ENCODE measurements at regions of chr2 and their contacts with region 1.

Region 1: GRCh38 chr2:108583903-108584520 is 49.7 kb downstream of the LIMS1 start:
- DNase-seq: peak; percentile 45 to 50
- H3K4me3 ChIP-seq: no peak overlapping the region
- H3K27ac ChIP-seq: no peak overlapping the region
- H3K4me1 ChIP-seq: no peaks in the 10 kb centered on the region
- H3K27me3 ChIP-seq: no peaks in the 10 kb centered on the region
- CTCF ChIP-seq: peak; percentile 84

Region 2: GRCh38 chr2:107936433-107937359 is 647.3 kb before region 1 on chr2:
- CTCF ChIA-PET with region 1: interaction called, 3 read pairs
- POLR2A ChIA-PET with region 1: no interaction called
- intact Hi-C with region 1: loop called (anchors 2 kb)
- DNase-seq: peak in 1 of 2 experiments; percentile 3
- H3K4me3 ChIP-seq: no peak overlapping the region
- H3K27ac ChIP-seq: no peak overlapping the region
- H3K4me1 ChIP-seq: no peaks in the 10 kb centered on the region
- H3K27me3 ChIP-seq: peaks cover 19% of the 10 kb centered on the region
- CTCF ChIP-seq: peak; percentile 79

Region 3: DNA sequence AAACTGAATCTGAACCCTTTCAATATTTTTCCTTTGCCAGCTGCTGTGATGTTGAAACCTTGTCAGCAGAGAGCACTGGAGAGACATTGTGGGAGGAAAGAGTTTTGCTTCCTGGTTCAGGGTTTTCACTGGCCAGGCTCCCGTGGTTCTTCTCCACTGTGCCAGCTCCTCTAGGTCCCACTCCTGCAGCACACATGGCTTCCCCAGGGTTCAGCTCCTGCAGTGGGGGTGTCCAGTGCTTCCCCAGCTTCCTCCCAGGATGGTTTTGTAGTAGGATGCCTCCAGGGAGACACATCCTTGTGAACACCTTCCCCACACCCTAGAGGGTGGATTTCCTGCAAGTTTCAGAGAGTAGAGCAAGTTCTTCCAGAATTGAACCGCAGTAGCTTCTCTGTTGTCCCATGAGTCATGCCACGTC is 368.2 kb before region 1 on chr2:
- CTCF ChIA-PET with region 1: no interaction called
- POLR2A ChIA-PET with region 1: no interaction called
- intact Hi-C with region 1: loop called (anchors 1 kb)
- DNase-seq: peak; percentile 19 to 49
- H3K4me3 ChIP-seq: peak overlapping the region; percentile 35
- H3K27ac ChIP-seq: peak overlapping the region; percentile 33; the same call in 1 of the 2 replicates
- H3K4me1 ChIP-seq: peaks cover 18% of the 10 kb centered on the region
- H3K27me3 ChIP-seq: no peaks in the 10 kb centered on the region
- CTCF ChIP-seq: no peak; the same call in 1 of the 2 replicates

Region 4: DNA sequence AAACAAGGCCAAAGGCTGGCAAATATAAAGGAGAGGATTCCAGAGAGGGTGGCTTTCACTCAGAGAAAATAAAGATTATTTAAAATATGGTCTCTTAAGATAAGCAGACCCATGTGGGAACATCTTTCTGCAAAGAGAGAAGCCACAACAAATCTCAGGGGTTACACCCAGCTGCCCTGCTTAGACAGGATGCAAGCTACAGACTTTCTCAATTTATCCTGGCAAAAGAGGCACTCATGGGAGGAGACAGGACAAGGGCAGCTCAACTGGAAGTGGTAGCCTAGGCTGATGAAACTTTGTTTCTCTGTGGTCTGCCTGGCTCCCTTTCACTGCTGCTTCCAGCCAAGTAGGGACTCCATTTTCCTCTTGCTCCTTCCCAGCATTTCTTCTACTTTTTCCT is 232.1 kb before region 1 on chr2:
- CTCF ChIA-PET with region 1: interaction called, 3 read pairs
- POLR2A ChIA-PET with region 1: no interaction called
- intact Hi-C with region 1: loop called (anchors 1 kb)
- DNase-seq: no peak
- H3K4me3 ChIP-seq: no peak overlapping the region
- H3K27ac ChIP-seq: no peak overlapping the region
- H3K4me1 ChIP-seq: no peaks in the 10 kb centered on the region
- H3K27me3 ChIP-seq: no peaks in the 10 kb centered on the region
- CTCF ChIP-seq: no peak

Region 5: DNA sequence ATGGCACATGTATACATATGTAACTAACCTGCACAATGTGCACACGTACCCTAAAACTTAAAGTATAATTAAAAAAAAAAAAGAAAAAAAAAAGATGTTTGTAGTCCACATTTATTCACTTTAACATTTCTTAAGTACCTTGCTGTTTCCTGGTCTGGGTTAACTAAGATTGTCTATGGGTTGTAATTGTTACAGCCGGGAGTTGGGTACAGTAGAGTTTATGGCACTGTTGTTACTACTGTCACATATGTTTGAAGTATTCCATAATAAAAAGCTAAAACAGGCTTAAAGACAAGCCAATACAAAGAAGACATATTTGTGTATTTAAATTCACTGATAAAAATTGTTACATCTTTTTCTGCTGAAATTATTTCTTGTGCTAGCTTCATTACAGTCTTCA is 98.8 kb before region 1 on chr2:
- CTCF ChIA-PET with region 1: interaction called, 6 read pairs
- POLR2A ChIA-PET with region 1: no interaction called
- intact Hi-C with region 1: loop called (anchors 10 kb)
- DNase-seq: no peak
- H3K4me3 ChIP-seq: no peak overlapping the region
- H3K27ac ChIP-seq: no peak overlapping the region
- H3K4me1 ChIP-seq: no peaks in the 10 kb centered on the region
- H3K27me3 ChIP-seq: no peaks in the 10 kb centered on the region
- CTCF ChIP-seq: no peak

Region 6: GRCh38 chr2:108533832-108534583 is 50.0 kb before region 1 on chr2 and contains the start of gene LIMS1:
- CTCF ChIA-PET with region 1: interaction called, 3 read pairs
- POLR2A ChIA-PET with region 1: no interaction called
- intact Hi-C with region 1: loop called (anchors 2 kb)
- DNase-seq: peak; percentile 90 to 93
- H3K4me3 ChIP-seq: peak within 1 kb of the TSS; percentile 73
- H3K27ac ChIP-seq: peak within 1 kb of the TSS; percentile 83
- H3K4me1 ChIP-seq: peaks cover 15% of the 10 kb centered on the region
- H3K27me3 ChIP-seq: no peaks in the 10 kb centered on the region
- CTCF ChIP-seq: no peak
- total RNA-seq, gene LIMS1: 58.2 and 61.6 TPM in 2 replicates

Region 7: GRCh38 chr2:108594132-108594981 is 10.3 kb after region 1 on chr2:
- CTCF ChIA-PET with region 1: no interaction called
- POLR2A ChIA-PET with region 1: no interaction called
- intact Hi-C with region 1: no loop called
- DNase-seq: peak; percentile 10 to 62
- H3K4me3 ChIP-seq: no peak overlapping the region; the same call in 1 of the 2 replicates
- H3K27ac ChIP-seq: peak overlapping the region; percentile 74
- H3K4me1 ChIP-seq: peaks cover 29% of the 10 kb centered on the region
- H3K27me3 ChIP-seq: no peaks in the 10 kb centered on the region
- CTCF ChIP-seq: no peak

Measured in PC-9 (cell line).